Common myeloid progenitor, CD34-positive (primary cell): ENCODE measurements at regions of chr9 and their contacts with region 1.

Region 1: DNA sequence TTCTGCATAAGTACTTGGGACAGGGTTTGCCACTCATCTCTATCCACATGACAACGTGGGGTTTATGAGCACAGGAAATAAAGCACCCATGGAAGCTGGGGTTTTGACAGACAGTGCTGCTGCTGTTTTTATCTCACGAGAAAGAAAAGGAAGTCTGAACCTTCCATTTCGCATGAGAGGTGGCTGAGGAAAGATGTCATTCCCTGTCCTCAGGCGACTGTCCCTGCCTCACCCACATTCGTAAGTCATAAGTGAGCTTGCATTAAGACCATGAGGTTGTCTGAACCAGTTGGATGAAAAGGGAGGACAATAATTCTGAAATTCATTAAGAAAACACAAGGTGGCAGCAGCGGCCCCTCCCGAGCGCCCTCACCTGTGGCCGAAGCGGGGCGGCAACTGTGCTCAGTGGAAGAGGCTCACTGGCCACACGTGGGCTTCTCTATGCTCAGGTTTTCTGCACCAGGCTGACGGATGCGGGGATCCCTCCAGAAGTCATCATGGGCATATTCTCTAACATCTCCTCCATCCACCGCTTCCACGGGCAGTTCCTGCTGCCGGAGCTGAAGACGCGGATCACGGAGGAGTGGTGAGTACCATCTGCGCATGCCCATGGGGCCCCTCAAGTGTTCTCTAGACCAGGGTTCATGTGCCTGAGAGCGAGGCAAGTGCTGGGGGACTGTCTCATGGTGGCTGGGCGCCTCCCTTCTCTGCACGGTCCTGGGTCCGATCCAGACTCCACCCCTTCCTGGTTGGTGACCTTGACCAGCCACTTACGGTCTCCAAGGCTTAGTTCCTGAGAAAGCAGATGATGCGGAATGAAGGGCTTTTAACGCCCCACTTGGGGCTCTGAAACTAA is 54.7 kb upstream of the SUSD3 start:
- DNase-seq: peak; percentile 25 to 50 (median 45)
- H3K4me3 ChIP-seq: no peak overlapping the region
- H3K27ac ChIP-seq: no peak overlapping the region
- H3K4me1 ChIP-seq: peaks cover 0 to 2% (median 0%) of the 10 kb centered on the region in 4 experiments
- H3K27me3 ChIP-seq: no peaks in the 10 kb centered on the region

Region 2: DNA sequence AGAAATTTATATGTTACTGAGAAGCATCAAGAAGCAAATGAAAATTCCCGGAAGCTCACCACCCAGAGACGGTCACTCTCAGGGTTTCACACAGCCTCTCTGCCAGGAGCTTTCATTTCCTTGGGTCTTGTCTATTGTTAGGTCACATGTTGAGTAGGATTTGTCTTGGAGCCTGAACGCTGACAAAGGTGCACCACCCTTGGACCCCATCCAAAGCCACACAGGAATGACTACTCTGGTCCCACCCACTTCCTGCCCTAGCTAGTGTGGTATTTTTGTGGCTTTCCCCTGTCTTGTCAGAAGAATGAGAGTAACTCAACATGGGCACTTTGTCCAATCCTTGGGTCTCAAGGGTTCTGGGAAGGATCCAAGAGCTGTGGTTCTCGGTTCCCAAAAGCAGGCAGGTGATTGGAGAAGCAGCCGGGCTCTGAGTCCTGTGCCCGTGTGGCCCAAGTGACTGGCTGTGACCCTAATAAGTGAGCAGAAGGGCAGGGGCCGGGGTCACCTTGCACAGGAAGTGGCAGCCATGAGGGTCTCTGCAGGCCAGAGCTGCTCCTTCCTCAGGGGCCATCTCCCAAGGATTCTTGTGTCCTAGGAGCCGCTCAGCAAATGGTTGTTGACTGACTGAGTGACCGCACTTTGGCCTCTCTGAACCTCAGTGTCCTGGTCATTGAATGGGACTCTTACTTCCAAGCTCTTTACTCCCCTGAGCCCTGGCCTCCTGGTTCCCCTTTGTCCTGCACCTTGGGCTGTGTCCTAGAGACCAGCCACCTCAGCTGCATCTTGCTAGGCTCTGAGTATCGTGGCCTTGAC is 49.5 kb before region 1 on chr9:
- CTCF ChIA-PET with region 1: interaction called, 11 read pairs
- POLR2A ChIA-PET with region 1: no interaction called
- DNase-seq: peak; percentile 36 to 71 (median 65)
- H3K4me3 ChIP-seq: peak overlapping the region in 2 of 7 experiments; percentile 32 to 38
- H3K27ac ChIP-seq: no peak overlapping the region
- H3K4me1 ChIP-seq: peaks cover 4 to 18% (median 14%) of the 10 kb centered on the region in 4 experiments
- H3K27me3 ChIP-seq: peaks cover 0 to 1% (median 0%) of the 10 kb centered on the region in 5 experiments

Region 3: DNA sequence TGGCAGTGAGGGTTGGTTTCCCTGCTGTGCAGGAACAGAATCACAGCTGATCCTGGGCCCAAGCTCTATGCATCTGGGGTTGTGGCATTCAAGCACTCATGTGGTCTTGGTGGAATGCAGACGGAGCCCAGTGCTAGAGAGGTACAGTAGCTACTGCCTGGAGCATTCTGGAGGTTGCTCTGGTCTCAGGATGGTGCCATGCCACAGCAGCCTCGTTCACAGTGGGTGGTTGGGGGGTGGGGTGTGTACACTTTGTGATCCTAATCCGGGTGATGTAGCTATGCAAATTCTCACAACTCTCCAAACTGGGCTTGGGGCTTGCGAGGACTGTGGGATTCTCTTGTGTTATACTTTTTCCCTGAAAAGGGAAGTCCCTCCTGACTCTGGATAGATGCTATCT is 11.2 kb before region 1 on chr9:
- CTCF ChIA-PET with region 1: interaction called, 23 read pairs
- POLR2A ChIA-PET with region 1: no interaction called
- DNase-seq: no peak
- H3K4me3 ChIP-seq: no peak overlapping the region
- H3K27ac ChIP-seq: no peak overlapping the region
- H3K4me1 ChIP-seq: peaks cover 2 to 16% (median 4%) of the 10 kb centered on the region in 4 experiments
- H3K27me3 ChIP-seq: no peaks in the 10 kb centered on the region

Region 4: DNA sequence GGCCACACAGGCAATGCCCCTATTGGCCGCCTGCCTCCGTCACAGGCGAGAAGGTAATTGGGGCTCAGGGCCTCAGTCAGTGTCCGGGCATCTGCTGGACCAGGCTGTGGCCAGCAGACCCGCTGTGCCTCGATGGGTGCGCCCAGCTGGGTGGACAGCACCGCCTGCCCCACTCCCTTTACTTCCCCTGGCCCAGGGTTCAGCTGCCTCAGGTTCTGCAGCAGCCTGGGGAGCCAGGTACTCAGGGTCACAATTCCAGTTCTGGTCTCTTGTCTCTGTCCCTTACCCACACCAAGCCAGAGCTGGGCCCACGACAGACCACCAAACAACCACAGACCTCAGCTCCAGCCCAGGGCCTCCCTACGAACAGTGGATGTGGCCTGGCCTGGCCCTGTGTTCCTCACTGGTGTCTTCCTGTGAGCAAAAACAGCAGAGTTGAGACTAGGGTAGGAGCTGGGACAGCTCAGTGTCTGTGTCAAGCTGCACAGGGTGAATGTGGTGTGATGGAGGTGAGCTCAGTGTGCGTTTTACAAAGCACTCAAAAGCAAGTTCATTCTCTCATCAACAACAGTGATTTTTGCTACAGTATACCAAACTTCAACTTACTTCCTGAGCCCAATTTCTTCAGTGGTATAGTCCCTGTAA is 21.3 kb after region 1 on chr9:
- CTCF ChIA-PET with region 1: interaction called, 11 read pairs
- POLR2A ChIA-PET with region 1: no interaction called
- DNase-seq: no peak
- H3K4me3 ChIP-seq: no peak overlapping the region
- H3K27ac ChIP-seq: no peak overlapping the region
- H3K4me1 ChIP-seq: peaks cover 0 to 22% (median 9%) of the 10 kb centered on the region in 4 experiments
- H3K27me3 ChIP-seq: no peaks in the 10 kb centered on the region